Colonic mucosa (tissue), 4 donors: ENCODE measurements at regions of chr20 and their contacts with region 1.

Region 1: DNA sequence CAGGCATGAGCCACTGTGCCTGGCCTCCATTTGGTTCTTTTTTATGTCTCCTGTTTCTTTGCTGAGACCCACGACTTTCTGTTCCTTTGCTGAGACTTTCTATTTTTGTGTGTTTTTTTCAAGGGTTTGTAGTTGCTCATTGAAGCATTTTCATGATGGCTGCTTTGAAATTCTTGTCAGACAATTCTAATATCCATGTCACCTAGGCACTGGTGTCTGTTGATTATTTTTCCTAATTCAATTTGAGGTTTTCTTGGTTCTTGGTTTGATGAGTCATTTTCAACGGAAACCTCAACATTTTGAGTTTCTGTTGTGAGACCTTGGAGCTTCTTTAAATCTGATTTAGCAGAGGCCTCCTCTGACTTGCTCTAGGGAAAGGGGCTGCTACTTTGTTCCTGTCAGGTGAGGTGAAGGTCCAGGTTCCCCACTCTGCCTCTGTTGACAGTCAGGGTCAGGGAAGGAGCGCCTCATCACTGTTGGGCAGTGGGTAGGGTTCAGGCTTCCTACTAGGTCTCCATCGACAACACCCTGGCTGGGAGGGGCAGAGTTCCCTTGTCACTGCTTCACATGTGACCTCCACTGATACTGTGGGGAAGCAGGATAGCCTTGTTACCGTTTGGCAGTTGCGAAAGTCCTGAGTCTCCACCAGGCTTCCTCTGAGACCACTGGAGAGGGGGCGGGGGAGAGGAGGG is 67.2 kb upstream of the RNF24 start:
- DNase-seq: no peak
- H3K4me3 ChIP-seq: no peak overlapping the region
- H3K27ac ChIP-seq: peak overlapping the region; percentile 2
- H3K4me1 ChIP-seq: no peaks in the 10 kb centered on the region
- H3K27me3 ChIP-seq: no peaks in the 10 kb centered on the region
- CTCF ChIP-seq: no peak

Region 2: DNA sequence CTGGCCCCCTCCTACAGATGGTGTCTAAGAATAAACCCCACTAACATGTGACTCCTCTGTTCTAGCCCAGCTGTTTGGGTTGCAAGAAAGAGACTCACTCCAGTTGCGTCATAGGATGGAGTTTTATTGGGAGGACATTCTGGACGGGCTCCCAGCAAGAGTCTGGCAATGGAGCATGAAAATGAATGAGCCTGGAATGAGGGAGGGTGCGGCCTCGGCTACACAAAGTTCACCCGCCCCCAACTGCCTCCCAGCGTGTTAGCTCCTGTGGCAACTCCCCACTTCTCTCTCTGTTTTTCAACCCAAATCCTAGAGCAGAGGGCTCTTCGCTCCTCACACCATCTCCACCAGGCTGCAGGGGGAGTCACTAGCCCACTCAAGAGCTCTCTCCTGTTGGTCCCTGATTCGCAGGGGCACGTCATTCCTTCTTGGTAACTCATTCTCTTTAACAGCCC is 395.7 kb before region 1 on chr20:
- intact Hi-C with region 1: loop called (anchors 10 kb)
- DNase-seq: peak; percentile 74
- H3K4me3 ChIP-seq: no peak overlapping the region
- H3K27ac ChIP-seq: peak overlapping the region; percentile 44
- H3K4me1 ChIP-seq: no peaks in the 10 kb centered on the region
- H3K27me3 ChIP-seq: peaks cover 7% of the 10 kb centered on the region
- CTCF ChIP-seq: no peak

Region 3: DNA sequence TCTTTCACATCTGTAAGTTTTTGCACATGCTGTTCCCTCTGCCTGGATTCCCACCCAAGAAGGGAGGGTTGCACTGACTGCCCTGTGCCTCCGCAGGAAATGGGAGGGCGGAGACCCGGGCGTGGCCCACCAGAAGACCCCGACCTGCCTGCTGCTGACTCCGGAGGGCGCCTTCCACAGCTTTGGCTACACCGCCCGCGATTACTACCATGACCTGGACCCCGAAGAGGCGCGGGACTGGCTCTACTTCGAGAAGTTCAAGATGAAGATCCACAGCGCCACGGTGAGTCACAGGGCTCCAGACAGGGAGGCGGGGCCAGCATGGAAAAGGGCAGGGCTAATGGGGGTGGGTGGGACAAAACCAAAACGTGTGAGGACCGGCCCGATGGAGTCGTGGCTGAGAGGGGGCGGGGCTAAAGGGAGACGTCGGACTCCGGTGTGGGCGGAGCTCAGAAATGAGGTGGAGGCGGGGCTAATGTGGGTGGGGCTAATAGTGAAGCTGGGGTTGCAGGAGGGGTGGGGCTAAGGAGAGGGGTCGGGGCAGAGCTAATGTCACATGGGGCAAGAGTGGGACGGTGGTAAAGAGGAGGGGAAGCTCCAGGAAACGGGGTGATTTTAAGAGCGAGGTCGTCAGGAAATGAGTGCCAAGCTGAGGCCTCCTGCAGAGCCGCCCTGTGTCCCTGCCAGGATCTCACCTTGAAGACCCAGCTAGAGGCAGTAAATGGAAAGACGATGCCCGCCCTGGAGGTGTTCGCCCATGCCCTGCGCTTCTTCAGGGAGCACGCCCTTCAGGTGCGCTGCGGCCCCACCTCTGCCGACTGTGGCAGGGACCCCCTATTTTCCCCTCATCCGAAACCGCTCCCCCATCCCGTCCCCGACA is 337.5 kb before region 1 on chr20:
- intact Hi-C with region 1: no loop called
- DNase-seq: peak; percentile 70
- H3K4me3 ChIP-seq: no peak overlapping the region
- H3K27ac ChIP-seq: no peak overlapping the region
- H3K4me1 ChIP-seq: no peaks in the 10 kb centered on the region
- H3K27me3 ChIP-seq: peaks cover 3% of the 10 kb centered on the region
- CTCF ChIP-seq: no peak